ENCODE measurements at regions of chr9 and their contacts with region 1.

Region 1: DNA sequence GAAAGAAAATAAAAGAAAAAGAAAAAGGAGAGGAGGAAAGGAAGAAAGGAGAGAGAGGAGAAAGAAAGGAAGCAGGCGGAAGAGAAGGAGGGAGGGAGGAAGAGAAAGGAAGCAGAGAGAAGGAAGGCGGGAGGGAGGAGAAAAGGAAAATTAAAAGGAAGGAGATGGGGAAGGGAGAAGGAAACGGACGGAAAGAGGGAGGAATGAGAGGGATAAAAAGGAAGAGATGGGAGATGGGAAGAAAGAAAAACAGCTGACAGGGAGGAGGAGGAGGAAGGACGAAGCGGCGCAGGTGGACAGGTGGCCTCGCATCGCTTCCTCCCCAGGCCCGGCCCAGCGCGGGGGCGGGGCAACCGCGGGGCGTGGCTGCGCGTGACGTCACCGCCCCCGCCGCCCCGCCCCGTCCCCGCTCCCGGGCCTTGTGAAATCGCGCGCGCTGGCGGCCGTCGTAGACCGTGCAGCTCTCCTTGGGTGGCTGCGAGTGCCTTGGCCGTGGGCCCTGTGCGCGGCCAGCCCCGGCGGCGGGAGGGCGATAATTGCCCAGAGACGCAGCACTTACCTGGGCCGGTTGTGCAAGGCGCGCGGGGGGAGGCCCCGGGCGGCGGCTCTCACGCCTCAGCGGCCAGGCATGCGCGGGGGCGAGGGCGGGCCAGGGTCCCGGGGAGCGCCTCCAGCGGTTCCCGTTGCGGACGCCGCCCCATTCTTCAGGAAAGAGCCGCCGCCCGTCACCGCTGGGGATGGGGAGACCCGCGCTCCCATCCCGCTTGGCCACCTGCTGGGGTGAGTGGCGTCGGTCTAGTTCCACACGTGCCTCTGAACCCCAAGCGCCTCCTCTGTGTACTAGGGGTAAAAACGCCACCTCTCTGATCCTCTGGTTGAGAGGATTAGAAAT is 49.6 kb upstream of the FOXE1 start:
- DNase-seq: peak; percentile 47 to 86 (median 77)
- ATAC-seq: peak; percentile 97
- H3K4me3 ChIP-seq: peak overlapping the region; percentile 43 to 56
- H3K4me3 Mint-ChIP-seq: peak overlapping the region; percentile 81
- H3K27ac ChIP-seq: no peak overlapping the region
- H3K27ac Mint-ChIP-seq: peak overlapping the region; percentile 42
- H3K4me1 ChIP-seq: peaks cover 7% of the 10 kb centered on the region
- H3K4me1 Mint-ChIP-seq: peaks cover 5% of the 10 kb centered on the region
- H3K27me3 ChIP-seq: peaks cover 3 to 5% of the 10 kb centered on the region in 2 experiments
- H3K27me3 Mint-ChIP-seq: peaks cover 13% of the 10 kb centered on the region
- CTCF ChIP-seq: no peak

Region 2: GRCh38 chr9:97660340-97660739 is 143.1 kb before region 1 on chr9:
- CTCF ChIA-PET with region 1: no interaction called
- POLR2A ChIA-PET with region 1: no interaction called
- intact Hi-C with region 1: no loop called
- DNase-seq: no peak
- ATAC-seq: no peak
- H3K4me3 ChIP-seq: no peak overlapping the region
- H3K4me3 Mint-ChIP-seq: no peak overlapping the region
- H3K27ac ChIP-seq: no peak overlapping the region
- H3K27ac Mint-ChIP-seq: no peak overlapping the region
- H3K4me1 ChIP-seq: no peaks in the 10 kb centered on the region
- H3K4me1 Mint-ChIP-seq: no peaks in the 10 kb centered on the region
- H3K27me3 ChIP-seq: no peaks in the 10 kb centered on the region
- H3K27me3 Mint-ChIP-seq: no peaks in the 10 kb centered on the region
- CTCF ChIP-seq: no peak

Region 3: DNA sequence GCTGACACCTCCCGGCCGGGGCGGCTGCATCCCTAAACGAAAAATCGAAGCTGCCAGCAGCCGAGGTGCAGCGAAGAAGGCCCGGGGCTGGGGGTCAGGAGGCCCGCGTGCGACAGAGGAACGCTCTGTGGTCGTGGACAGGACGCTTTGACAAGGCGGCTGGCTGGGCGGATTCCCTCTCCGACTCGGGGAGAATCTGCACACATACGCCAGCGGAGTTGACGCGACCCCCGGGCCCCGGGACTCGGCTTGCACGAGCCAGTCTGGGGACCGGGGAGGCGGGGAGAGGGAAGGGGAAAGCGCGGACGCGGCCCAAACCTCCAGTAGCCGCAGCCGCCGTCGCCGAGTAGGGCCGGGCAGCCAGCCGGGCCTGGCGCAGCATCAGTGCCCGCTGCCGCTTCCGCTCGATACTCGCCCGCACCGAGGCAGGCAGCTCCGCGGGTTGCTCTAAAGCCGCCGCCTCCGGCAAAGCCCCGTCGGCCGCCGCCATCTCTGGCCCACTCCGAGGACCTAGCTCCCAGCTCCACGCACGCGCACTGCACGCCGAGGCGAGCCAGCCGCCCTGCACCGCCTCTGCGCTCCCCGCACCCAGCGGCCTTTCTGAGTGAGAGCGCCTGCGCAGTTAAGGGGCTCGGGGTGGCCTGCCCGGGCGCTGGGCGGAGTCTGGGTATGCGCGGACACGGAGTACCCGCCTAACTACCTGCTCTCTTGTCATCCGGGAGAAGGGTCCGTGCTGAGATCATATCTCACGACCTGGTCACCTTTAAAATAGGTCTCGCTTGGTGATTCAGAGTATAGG is 106.4 kb before region 1 on chr9 and contains the start of gene XPA:
- CTCF ChIA-PET with region 1: no interaction called
- POLR2A ChIA-PET with region 1: no interaction called
- intact Hi-C with region 1: loop called (anchors 2 kb)
- DNase-seq: peak; percentile 90 to 99 (median 97)
- ATAC-seq: peak; percentile 94
- H3K4me3 ChIP-seq: peak within 1 kb of the TSS; percentile 68 to 79
- H3K4me3 Mint-ChIP-seq: peak within 1 kb of the TSS; percentile 83
- H3K27ac ChIP-seq: peak within 1 kb of the TSS; percentile 60 to 79
- H3K27ac Mint-ChIP-seq: peak within 1 kb of the TSS; percentile 92
- H3K4me1 ChIP-seq: peaks cover 39% of the 10 kb centered on the region
- H3K4me1 Mint-ChIP-seq: peaks cover 53% of the 10 kb centered on the region
- H3K27me3 ChIP-seq: no peaks in the 10 kb centered on the region
- H3K27me3 Mint-ChIP-seq: peaks cover 4% of the 10 kb centered on the region
- CTCF ChIP-seq: no peak
- total RNA-seq, gene XPA: 21.1 to 24.9 TPM

Region 4: DNA sequence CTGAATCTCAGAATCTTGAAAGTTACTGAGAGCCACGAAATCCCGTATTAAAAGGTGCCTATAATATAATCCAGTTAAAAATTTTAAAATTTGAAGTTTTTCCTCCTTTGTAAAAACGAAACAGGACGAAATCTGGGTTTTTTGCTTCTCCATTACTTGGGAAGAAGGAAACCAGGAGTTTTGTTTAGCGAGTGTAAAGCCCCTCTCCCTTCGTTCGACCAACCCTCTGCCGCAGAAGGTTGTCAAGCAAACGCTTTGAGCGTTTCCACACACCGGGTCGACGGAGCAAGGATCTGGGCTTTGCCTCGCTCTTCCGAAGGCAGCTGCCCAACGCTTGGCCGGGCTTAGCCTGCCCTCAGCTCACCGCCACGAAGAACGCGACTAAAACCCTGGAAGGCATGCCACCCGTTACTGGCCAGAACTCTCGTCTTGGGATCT is 48.1 kb after region 1 on chr9:
- CTCF ChIA-PET with region 1: no interaction called
- POLR2A ChIA-PET with region 1: no interaction called
- intact Hi-C with region 1: loop called in 1 of 2 experiments (anchors 2 kb)
- DNase-seq: no peak
- ATAC-seq: no peak
- H3K4me3 ChIP-seq: no peak overlapping the region
- H3K4me3 Mint-ChIP-seq: peak overlapping the region; percentile 45
- H3K27ac ChIP-seq: no peak overlapping the region
- H3K27ac Mint-ChIP-seq: no peak overlapping the region
- H3K4me1 ChIP-seq: peaks cover 40% of the 10 kb centered on the region
- H3K4me1 Mint-ChIP-seq: peaks cover 34% of the 10 kb centered on the region
- H3K27me3 ChIP-seq: peaks cover 53 to 63% of the 10 kb centered on the region in 2 experiments
- H3K27me3 Mint-ChIP-seq: peaks cover 76% of the 10 kb centered on the region
- CTCF ChIP-seq: no peak

Measured in CD8-positive, alpha-beta T cell (primary cell).